A549 (cell line): ENCODE measurements at regions of chr17 and their contacts with region 1.

Region 1: GRCh38 chr17:42019509-42020404 is at the start of gene NKIRAS2:
- DNase-seq: peak; percentile 94 to 98
- ATAC-seq: peak; percentile 72 to 80
- H3K4me3 ChIP-seq: peak within 1 kb of the TSS; percentile 93
- H3K27ac ChIP-seq: peak within 1 kb of the TSS; percentile 92 to 93
- H3K4me1 ChIP-seq: peaks cover 40% of the 10 kb centered on the region
- CTCF ChIP-seq: peak; percentile 86
- EP300 ChIP-seq: no peak
- POLR2A ChIP-seq: peak; percentile 73
- RAD21 ChIP-seq: no peak
- polyA plus RNA-seq, gene NKIRAS2: 52.2 and 54.3 TPM in 2 replicates

Region 2: DNA sequence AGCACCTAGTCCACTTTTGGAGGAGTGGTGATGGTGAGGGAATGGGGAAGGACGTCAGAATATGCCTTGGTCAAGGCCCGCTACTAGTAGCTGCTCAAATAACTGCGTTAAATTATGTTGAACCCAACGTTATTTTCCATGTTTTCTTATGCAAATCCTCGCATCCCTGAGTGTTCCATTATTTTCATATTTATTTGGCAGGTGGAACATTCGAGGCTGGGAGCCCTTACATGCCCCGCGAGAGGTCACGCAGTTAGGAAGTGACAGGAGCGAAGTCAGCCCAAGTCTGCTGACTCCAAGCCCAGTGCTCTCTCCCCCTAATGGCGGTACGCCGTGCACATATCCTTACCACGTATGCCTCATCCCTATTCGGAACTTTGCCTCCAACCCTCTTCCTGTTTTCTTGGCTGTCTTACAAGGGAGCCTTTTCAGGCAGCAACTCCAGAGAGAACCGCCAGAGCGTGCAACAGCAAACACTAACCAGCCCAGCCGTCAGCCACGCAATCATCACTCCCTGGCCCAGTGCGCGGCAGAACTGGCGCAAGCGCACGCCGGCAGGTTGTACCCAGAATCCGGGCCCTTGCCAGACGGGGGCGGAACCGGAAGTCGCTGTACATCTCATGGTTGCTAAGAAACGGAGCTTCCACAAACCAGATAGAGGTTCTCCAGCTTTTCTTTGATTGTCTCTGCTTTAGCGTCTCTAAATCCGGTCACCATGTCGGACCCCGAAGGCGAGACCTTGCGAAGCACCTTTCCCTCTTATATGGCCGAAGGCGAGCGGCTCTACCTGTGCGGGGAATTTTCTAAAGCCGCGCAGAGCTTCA is 89.5 kb before region 1 on chr17 and contains the start of gene ODAD4:
- CTCF ChIA-PET with region 1: interaction called, 3 read pairs
- POLR2A ChIA-PET with region 1: interaction called, 23 read pairs
- DNase-seq: peak; percentile 98 to 99
- ATAC-seq: peak; percentile 99
- H3K4me3 ChIP-seq: peak within 1 kb of the TSS; percentile 55
- H3K27ac ChIP-seq: peak within 1 kb of the TSS; percentile 76 to 89
- H3K4me1 ChIP-seq: peaks cover 35% of the 10 kb centered on the region
- CTCF ChIP-seq: peak; percentile 45
- EP300 ChIP-seq: no peak; a peak in 1 of 5 replicates
- POLR2A ChIP-seq: peak; percentile 90
- RAD21 ChIP-seq: peak; percentile 49 to 56; a peak in 4 of 5 replicates
- polyA plus RNA-seq, gene ODAD4: 2.0 and 2.3 TPM in 2 replicates

Region 3: DNA sequence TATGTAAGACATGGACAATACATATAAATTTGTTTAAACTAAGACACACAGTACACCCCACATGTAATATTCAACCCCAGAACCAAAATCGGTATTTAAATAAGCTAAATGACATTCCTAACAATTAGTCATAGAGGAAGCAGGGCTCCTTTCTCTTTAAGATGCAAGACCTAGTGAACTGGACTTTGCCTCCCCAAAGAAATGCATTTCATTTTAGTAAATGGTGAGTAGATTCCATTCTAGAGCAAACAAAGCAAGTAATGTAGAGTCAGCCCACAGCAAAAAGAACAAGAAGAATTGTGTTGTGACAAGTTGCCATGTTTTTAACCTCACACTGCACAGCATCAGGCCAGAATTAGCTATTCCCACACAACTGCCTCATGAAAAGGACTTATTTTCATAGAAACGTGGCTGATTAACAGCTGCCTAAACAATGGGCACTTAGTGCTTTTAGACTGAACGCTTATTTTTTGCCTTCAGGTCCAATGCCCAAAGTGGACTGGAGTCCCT is 16.9 kb before region 1 on chr17:
- CTCF ChIA-PET with region 1: interaction called, 70 read pairs
- POLR2A ChIA-PET with region 1: interaction called, 10 read pairs
- DNase-seq: peak in 1 of 2 experiments; percentile 64
- ATAC-seq: peak; percentile 70 to 86; a peak in 5 of 6 replicates
- H3K4me3 ChIP-seq: peak overlapping the region; percentile 20; the same call in 2 of the 3 replicates
- H3K27ac ChIP-seq: peak overlapping the region; percentile 61 to 84
- H3K4me1 ChIP-seq: peaks cover 46% of the 10 kb centered on the region
- CTCF ChIP-seq: no peak
- EP300 ChIP-seq: no peak
- POLR2A ChIP-seq: no peak
- RAD21 ChIP-seq: no peak

Region 4: GRCh38 chr17:42050393-42051012 is 30.7 kb after region 1 on chr17 and contains the start of gene C17orf113:
- CTCF ChIA-PET with region 1: interaction called, 346 read pairs
- POLR2A ChIA-PET with region 1: interaction called, 3 read pairs
- DNase-seq: peak; percentile 61 to 89
- ATAC-seq: peak; percentile 87 to 90
- H3K4me3 ChIP-seq: peak within 1 kb of the TSS; percentile 64
- H3K27ac ChIP-seq: peak within 1 kb of the TSS; percentile 76 to 88
- H3K4me1 ChIP-seq: peaks cover 12% of the 10 kb centered on the region
- CTCF ChIP-seq: peak; percentile 82
- EP300 ChIP-seq: no peak
- POLR2A ChIP-seq: peak; percentile 62
- RAD21 ChIP-seq: peak; percentile 40 to 48; a peak in 4 of 5 replicates
- polyA plus RNA-seq, gene C17orf113: 1.0 and 1.4 TPM in 2 replicates

Region 5: DNA sequence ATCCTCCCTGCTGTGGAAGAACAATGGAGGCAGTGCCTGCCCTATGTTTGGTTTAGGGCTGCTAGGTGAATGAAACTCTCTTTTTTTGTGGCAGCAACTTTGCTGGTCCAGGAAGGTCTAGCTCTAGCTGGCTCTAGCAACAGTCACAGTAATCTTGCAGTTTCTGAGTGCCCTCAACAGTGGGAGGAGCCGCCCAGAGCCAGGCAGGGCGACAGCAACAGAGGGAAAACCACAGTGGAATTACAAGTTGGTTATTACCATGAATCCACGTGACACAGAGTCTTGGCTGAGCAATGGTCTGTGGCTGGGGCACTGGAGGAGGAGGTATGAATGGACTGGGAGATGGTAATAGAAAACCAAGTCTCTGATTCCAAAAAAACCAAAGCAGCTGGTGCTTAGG is 113.2 kb after region 1 on chr17:
- CTCF ChIA-PET with region 1: interaction called, 16 read pairs
- POLR2A ChIA-PET with region 1: no interaction called
- DNase-seq: no peak
- ATAC-seq: no peak
- H3K4me3 ChIP-seq: no peak overlapping the region
- H3K27ac ChIP-seq: no peak overlapping the region
- H3K4me1 ChIP-seq: peaks cover 37% of the 10 kb centered on the region
- CTCF ChIP-seq: no peak
- EP300 ChIP-seq: no peak
- POLR2A ChIP-seq: no peak
- RAD21 ChIP-seq: no peak